ENCODE measurements at regions of chr1 and their contacts with region 1.

Region 1: GRCh38 chr1:182143154-182143657 is 81.7 kb upstream of the ZNF648 start:
- DNase-seq: peak; percentile 97
- H3K4me3 ChIP-seq: no peak overlapping the region
- H3K27ac ChIP-seq: peak overlapping the region; percentile 90 to 93
- H3K4me1 ChIP-seq: peaks cover 31% of the 10 kb centered on the region
- H3K27me3 ChIP-seq: no peaks in the 10 kb centered on the region
- CTCF ChIP-seq: peak; percentile 98 to 100 (median 98)
- POLR2A ChIP-seq: no peak

Region 2: DNA sequence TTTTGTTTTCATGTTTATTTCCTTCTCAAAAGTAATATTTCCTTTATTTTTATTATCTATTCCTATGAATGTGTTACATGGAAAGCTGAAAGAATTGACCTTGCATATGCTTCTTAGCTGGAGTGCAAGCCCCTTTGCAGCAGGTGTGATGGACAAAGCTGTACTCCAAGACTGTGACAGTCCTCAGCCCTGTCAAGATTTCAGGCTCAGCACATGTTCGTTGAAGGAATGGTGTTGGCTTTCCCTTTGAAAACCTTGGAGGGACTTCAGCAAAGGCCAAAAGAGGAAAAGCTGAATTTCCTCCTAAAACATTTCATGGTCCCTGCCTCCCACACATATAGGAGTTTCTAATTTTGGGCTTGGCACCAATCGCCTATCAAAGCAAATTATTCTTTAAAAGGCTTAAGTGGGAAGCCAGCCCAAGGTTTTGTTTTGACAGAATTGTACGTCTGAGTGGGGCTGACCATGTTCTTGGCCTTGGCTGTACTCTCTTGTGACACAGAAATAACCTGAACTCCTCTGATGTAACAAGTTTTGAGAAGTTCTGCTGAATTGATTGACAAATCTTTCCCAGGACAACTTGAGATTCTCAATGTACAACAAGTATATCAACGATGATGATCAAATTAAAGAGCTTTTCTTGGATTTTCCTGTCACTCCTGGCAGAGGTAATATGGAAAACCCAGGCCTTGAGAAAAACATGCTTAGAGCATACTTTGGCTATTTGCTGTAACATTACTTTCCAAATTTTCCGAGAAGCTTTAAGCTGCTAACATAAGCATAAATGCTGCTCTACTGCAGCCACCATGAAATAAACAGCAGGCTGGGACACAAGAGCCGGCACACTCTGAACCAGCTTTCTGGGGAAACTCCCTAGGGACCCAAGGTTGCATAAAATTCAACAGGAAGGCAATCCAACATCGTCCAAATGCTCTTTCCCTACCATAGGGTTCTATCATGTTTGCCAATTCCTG is 54.0 kb after region 1 on chr1:
- intact Hi-C with region 1: loop called (anchors 2 kb)
- DNase-seq: peak; percentile 80
- H3K4me3 ChIP-seq: no peak overlapping the region
- H3K27ac ChIP-seq: peak overlapping the region; percentile 41 to 74
- H3K4me1 ChIP-seq: peaks cover 23% of the 10 kb centered on the region
- H3K27me3 ChIP-seq: no peaks in the 10 kb centered on the region
- CTCF ChIP-seq: no peak
- POLR2A ChIP-seq: no peak

Region 3: GRCh38 chr1:182279724-182280503 is 136.7 kb after region 1 on chr1:
- intact Hi-C with region 1: loop called (anchors 10 kb)
- DNase-seq: peak; percentile 62
- H3K4me3 ChIP-seq: no peak overlapping the region
- H3K27ac ChIP-seq: no peak overlapping the region
- H3K4me1 ChIP-seq: peaks cover 4% of the 10 kb centered on the region
- H3K27me3 ChIP-seq: no peaks in the 10 kb centered on the region
- CTCF ChIP-seq: no peak
- POLR2A ChIP-seq: no peak

Region 4: DNA sequence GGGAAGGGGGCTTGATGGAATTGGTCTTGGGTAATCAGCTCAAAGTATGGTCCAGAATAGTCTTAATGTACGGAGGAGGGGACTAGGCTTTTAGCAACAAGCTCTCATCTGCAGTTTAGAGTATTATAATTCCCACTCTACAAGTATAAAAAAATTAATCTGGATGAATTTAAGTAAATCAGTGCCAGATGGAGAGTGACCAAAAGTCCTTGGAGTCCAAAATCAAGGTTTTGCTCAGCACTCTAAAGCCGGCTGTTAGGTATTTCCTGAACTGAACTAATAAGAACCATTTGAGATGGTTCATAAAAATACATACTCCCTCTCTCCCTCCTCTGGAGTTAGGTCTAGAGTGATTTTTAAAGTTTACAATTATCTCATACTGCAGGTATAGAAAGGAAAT is 224.7 kb after region 1 on chr1:
- intact Hi-C with region 1: no loop called
- DNase-seq: no peak
- H3K4me3 ChIP-seq: no peak overlapping the region
- H3K27ac ChIP-seq: peak overlapping the region in 1 of 2 donors; percentile 45
- H3K4me1 ChIP-seq: peaks cover 12% of the 10 kb centered on the region
- H3K27me3 ChIP-seq: no peaks in the 10 kb centered on the region
- CTCF ChIP-seq: no peak
- POLR2A ChIP-seq: no peak

Region 5: GRCh38 chr1:182391362-182392044 is 248.3 kb after region 1 on chr1 and contains the start of gene GLUL:
- intact Hi-C with region 1: loop called (anchors 5 kb)
- DNase-seq: peak; percentile 97
- H3K4me3 ChIP-seq: peak within 1 kb of the TSS; percentile 93 to 98
- H3K27ac ChIP-seq: peak within 1 kb of the TSS; percentile 97 to 99
- H3K4me1 ChIP-seq: peaks cover 48% of the 10 kb centered on the region
- H3K27me3 ChIP-seq: no peaks in the 10 kb centered on the region
- CTCF ChIP-seq: no peak
- POLR2A ChIP-seq: peak; percentile 89
- total RNA-seq, gene GLUL: 1,066 to 1,224 TPM

Measured in testis (tissue), 5 donors.